ENCODE measurements at regions of chr11 and their contacts with region 1.

Region 1: GRCh38 chr11:44538375-44539054 is 26.9 kb upstream of the CD82 start:
- DNase-seq: peak; percentile 93
- H3K4me3 ChIP-seq: no peak overlapping the region
- H3K27ac ChIP-seq: no peak overlapping the region
- H3K4me1 ChIP-seq: peaks cover 8% of the 10 kb centered on the region
- H3K27me3 ChIP-seq: no peaks in the 10 kb centered on the region
- CTCF ChIP-seq: peak; percentile 100

Region 2: GRCh38 chr11:44029977-44030911 is 508.3 kb before region 1 on chr11:
- CTCF ChIA-PET with region 1: interaction called, 10 read pairs
- POLR2A ChIA-PET with region 1: no interaction called
- intact Hi-C with region 1: no loop called
- DNase-seq: no peak
- H3K4me3 ChIP-seq: no peak overlapping the region
- H3K27ac ChIP-seq: no peak overlapping the region
- H3K4me1 ChIP-seq: no peaks in the 10 kb centered on the region
- H3K27me3 ChIP-seq: no peaks in the 10 kb centered on the region
- CTCF ChIP-seq: no peak

Region 3: GRCh38 chr11:44095506-44096394 is 442.8 kb before region 1 on chr11 and contains the start of gene EXT2:
- CTCF ChIA-PET with region 1: interaction called, 4 read pairs
- POLR2A ChIA-PET with region 1: no interaction called
- intact Hi-C with region 1: loop called (anchors 1 kb)
- DNase-seq: peak; percentile 95
- H3K4me3 ChIP-seq: peak within 1 kb of the TSS; percentile 66
- H3K27ac ChIP-seq: peak within 1 kb of the TSS; percentile 72
- H3K4me1 ChIP-seq: peaks cover 16% of the 10 kb centered on the region
- H3K27me3 ChIP-seq: no peaks in the 10 kb centered on the region
- CTCF ChIP-seq: peak; percentile 100
- total RNA-seq, gene EXT2: 123 and 128 TPM in 2 replicates

Region 4: GRCh38 chr11:44110231-44110679 is 428.3 kb before region 1 on chr11:
- CTCF ChIA-PET with region 1: no interaction called
- POLR2A ChIA-PET with region 1: no interaction called
- intact Hi-C with region 1: loop called (anchors 1 kb)
- DNase-seq: peak; percentile 90
- H3K4me3 ChIP-seq: no peak overlapping the region
- H3K27ac ChIP-seq: no peak overlapping the region
- H3K4me1 ChIP-seq: peaks cover 32% of the 10 kb centered on the region
- H3K27me3 ChIP-seq: no peaks in the 10 kb centered on the region
- CTCF ChIP-seq: peak; percentile 100

Region 5: GRCh38 chr11:44133335-44133946 is 405.1 kb before region 1 on chr11:
- CTCF ChIA-PET with region 1: interaction called, 3 read pairs
- POLR2A ChIA-PET with region 1: no interaction called
- intact Hi-C with region 1: loop called (anchors 1 kb)
- DNase-seq: peak; percentile 91
- H3K4me3 ChIP-seq: no peak overlapping the region
- H3K27ac ChIP-seq: peak overlapping the region; percentile 49
- H3K4me1 ChIP-seq: peaks cover 68% of the 10 kb centered on the region
- H3K27me3 ChIP-seq: no peaks in the 10 kb centered on the region
- CTCF ChIP-seq: peak; percentile 99

Region 6: GRCh38 chr11:44286268-44286880 is 252.1 kb before region 1 on chr11:
- CTCF ChIA-PET with region 1: no interaction called
- POLR2A ChIA-PET with region 1: interaction called, 4 read pairs
- intact Hi-C with region 1: loop called (anchors 1 kb)
- DNase-seq: peak; percentile 91
- H3K4me3 ChIP-seq: no peak overlapping the region
- H3K27ac ChIP-seq: peak overlapping the region; percentile 53
- H3K4me1 ChIP-seq: peaks cover 51% of the 10 kb centered on the region
- H3K27me3 ChIP-seq: no peaks in the 10 kb centered on the region
- CTCF ChIP-seq: peak; percentile 100

Region 7: DNA sequence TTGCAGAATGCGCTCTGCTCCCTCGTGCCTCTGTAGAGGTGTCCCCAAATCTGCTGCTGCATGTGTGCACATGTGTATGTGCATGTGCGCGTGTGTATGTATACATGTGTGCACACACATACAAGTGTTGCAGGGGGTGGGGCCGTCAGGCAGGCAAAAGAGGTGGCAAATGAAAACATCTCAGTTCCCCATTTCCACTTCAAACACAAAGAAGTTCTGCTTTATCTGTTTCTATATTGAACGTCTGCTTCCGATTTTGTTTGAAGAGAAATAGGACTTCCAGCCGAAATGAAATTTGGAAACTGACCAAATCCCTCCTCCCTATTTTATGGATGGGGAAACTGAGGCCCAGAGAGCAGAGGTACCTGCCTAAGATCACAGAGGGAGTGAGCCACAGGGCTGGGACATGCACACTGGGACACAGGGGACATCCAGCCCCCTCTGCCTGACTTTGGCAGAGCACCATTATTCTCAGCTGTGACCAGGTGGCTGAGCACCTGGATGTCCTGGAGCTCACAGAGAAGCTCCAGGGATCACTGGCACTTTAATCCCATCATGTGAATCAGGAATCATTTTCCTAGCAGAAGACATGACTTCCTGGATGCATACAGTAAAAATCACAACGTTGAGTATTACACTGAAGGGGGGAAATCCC is 187.4 kb before region 1 on chr11:
- CTCF ChIA-PET with region 1: no interaction called
- POLR2A ChIA-PET with region 1: no interaction called
- intact Hi-C with region 1: loop called (anchors 5 kb)
- DNase-seq: no peak
- H3K4me3 ChIP-seq: no peak overlapping the region
- H3K27ac ChIP-seq: no peak overlapping the region
- H3K4me1 ChIP-seq: no peaks in the 10 kb centered on the region
- H3K27me3 ChIP-seq: no peaks in the 10 kb centered on the region
- CTCF ChIP-seq: no peak